ENCODE measurements at regions of chr1 and their contacts with region 1.

Region 1: GRCh38 chr1:31959521-31960340 is 21.6 kb upstream of the PTP4A2 start:
- DNase-seq: no peak
- ATAC-seq: no peak

Region 2: GRCh38 chr1:31771891-31772668 is 187.7 kb before region 1 on chr1:
- intact Hi-C with region 1: no loop called
- DNase-seq: no peak
- ATAC-seq: peak; percentile 15 to 27

Region 3: GRCh38 chr1:31789259-31790065 is 170.3 kb before region 1 on chr1:
- intact Hi-C with region 1: loop called in 1 of 2 experiments (anchors 10 kb)
- DNase-seq: peak; percentile 95
- ATAC-seq: peak; percentile 88 to 92

Region 4: DNA sequence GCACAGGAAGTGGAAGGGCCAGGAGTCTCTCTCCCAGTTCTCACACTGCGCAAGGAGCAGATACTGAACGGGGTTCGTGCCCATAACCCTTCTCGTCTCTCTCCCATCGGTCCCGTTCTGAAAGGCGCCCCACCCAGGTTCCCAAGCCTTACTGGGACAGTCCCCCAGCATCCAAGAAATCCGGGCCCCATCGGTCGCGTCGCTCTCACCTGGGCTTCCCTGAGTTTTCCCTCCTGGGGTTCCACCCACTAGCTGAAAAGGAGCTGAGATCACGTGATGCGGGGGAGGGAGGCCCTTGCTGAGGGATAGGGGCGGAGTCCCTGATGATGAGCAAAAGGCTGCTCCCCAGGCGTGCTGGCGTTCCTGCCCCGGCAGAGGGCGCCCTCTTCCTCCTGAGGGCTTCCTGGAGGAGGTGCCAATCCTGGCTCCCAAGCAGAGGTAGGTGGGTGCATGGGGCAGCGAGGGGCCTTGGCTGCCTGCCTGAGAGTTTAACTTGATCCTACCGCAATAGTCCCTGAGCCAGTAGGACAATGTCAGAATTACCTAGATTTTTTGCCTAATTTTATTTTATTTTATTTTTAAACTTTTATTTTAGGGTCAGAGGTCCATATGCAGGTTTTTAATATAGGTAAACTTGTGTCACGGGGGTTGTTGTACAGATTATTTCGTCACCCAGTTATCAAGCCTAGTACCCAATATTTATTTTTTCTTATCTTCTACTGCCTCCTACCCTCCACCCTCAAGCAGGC is 143.8 kb before region 1 on chr1 and contains the start of gene SPOCD1:
- intact Hi-C with region 1: loop called in 1 of 2 experiments (anchors 5 kb)
- DNase-seq: peak; percentile 84
- ATAC-seq: peak; percentile 70 to 85
- total RNA-seq, gene SPOCD1: 0.18 to 1.2 TPM

Region 5: DNA sequence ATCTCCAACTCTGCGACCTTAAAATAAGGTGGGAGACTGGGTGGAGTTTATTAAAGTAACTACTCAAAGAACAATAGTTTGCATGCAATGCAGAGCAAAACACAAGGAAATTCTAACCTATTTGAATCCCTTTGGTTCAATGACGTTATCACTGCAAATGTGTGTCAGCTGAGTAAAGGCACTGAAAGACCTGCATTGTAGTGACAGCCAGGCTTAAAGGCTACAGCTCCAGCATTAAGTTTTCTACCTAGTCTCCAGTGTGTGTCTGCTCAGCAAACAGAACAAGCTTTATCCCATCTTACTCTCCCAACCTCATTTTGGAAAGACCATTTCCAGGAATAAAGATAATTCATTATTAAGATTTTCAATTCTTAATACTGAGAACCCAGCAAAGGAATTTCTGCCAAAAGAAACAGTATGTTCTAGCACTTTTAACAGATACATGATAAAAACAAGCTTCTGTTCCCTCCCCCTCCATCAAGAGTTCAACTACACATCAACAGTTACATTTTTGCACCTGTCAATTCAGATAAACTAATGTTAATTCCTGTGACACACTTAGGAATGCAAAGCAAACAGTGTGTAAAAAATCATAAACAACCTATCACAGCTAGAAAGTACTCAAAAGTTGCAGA is 35.7 kb before region 1 on chr1:
- intact Hi-C with region 1: loop called in 1 of 2 experiments (anchors 5 kb)
- DNase-seq: no peak
- ATAC-seq: peak in 1 of 2 donors; percentile 21

Measured in left cardiac atrium (tissue), 4 donors.